ENCODE measurements at regions of chr3 and their contacts with region 1.

Region 1: GRCh38 chr3:9649791-9650521 is 651 bp downstream of the MTMR14 start:
- DNase-seq: no peak
- H3K4me3 ChIP-seq: peak overlapping the region; percentile 89 to 97
- H3K27ac ChIP-seq: peak overlapping the region; percentile 31 to 90
- H3K4me1 ChIP-seq: peaks cover 10% of the 10 kb centered on the region
- H3K27me3 ChIP-seq: no peaks in the 10 kb centered on the region
- CTCF ChIP-seq: no peak
- POLR2A ChIP-seq: no peak

Region 2: DNA sequence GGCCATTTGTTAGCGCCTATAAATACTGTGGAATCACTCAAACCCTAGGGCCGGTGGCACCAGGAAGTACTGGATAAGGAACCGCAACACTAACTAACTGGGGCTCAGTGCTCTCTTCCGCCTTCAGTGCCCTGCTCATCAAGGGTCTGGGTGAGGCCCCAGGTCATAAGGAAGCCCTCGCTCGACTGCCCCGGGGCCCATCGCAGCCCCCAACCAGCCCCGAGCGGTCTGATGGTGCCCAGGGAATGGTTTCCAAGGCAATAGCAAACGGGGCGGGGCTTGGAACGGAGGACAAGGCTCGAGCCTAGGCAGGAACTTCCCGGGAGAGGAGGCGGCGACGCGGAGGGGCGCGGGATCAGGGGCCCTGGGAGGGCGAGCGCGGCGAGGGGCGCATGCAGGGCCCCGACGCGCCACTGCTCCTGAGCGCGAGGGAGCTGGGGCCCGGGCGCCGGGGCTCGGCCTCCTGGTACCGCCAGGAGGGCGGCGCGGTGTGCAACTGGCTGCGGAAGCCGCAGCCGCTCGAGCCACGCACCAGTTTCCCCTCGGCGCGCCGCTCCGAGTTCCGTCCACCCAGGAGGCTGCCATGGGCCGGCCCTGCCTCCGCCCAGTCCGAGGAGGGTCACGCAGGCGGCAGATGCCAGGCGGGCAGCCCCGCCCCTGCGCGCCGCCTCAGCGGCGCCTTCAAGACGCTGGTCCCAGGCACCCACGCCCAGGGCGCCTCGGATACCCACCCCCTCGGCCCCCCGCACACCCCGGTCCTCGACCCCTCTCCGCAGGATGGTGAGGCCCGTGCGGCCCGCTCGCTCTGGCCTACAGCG is 159.9 kb after region 1 on chr3 and contains the start of gene TTLL3:
- intact Hi-C with region 1: loop called (anchors 10 kb)
- DNase-seq: peak; percentile 83
- H3K4me3 ChIP-seq: peak within 1 kb of the TSS; percentile 79 to 81
- H3K27ac ChIP-seq: peak within 1 kb of the TSS; percentile 84 to 91
- H3K4me1 ChIP-seq: peaks cover 12% of the 10 kb centered on the region
- H3K27me3 ChIP-seq: no peaks in the 10 kb centered on the region
- CTCF ChIP-seq: no peak
- POLR2A ChIP-seq: no peak
- total RNA-seq, gene TTLL3: 142 to 163 TPM